ENCODE measurements at regions of chr22 and their contacts with region 1.

Region 1: DNA sequence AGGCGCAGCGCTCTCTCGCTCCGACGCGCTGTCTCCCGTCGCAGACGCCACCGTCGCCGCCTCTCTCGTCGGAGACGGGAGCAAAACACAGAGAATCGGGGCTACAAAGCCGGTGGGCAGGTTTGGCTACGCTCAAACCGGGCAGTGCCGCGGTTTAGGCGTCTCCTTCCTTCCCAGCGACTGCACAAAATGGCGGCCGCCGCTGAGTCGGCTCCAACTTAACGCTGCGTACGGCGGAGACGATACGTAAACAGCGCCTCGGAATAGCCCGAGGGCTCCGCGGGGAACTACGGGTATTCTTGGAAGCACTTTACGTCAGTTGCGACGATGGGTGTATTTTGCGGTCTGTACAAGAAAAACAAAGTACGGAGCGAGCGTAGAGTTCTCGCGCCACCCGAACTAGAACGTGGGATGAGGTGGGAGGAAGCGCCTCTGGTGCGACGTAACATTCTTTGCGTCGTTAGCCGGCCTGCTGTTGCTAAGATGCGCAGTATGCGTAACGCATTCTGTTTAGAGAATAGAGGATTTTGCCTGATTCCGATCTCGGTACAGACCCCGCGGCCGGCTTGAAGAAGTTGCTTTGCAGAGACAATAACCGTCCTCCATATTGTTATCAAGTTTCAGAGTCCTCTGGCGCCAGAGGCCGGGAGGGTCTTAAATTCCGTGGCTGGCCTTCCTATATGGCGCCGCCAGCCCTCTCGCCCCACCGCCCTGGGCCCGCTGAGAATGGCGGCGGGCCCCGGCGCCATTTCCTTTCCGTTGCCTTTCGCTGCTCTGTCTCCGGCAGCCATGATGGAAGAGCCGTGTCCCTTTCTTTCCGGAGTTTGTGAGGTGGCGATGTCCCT is at the start of gene DDX17:
- DNase-seq: peak; percentile 96
- ATAC-seq: peak; percentile 91
- H3K4me3 Mint-ChIP-seq: peak within 1 kb of the TSS; percentile 93
- H3K27ac Mint-ChIP-seq: peak within 1 kb of the TSS; percentile 100
- H3K4me1 Mint-ChIP-seq: peaks cover 32% of the 10 kb centered on the region
- H3K27me3 Mint-ChIP-seq: no peaks in the 10 kb centered on the region
- CTCF ChIP-seq: no peak
- total RNA-seq, gene DDX17: 320 to 334 TPM

Region 2: DNA sequence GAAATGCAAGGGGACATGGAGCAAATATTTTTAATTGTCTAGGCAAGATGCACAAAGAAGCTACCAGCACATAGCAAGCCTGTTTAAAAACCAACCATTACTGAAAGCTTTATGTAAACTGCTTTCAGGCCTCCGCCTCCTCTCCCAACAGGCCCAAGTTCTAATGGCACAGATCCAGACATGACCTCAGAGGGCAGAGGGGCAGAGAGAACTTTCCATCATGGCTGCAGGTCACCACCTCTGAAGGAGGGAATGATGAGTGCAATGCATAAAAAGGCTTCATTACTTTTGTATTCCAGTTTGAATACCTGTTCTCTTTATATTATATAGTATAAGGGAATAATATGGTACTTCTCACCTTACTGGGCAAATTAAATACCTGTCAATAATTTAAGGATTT is 15.4 kb before region 1 on chr22:
- CTCF ChIA-PET with region 1: interaction called, 6 read pairs
- POLR2A ChIA-PET with region 1: interaction called, 43 read pairs
- intact Hi-C with region 1: no loop called
- DNase-seq: no peak
- ATAC-seq: no peak
- H3K4me3 Mint-ChIP-seq: no peak overlapping the region
- H3K27ac Mint-ChIP-seq: peak overlapping the region; percentile 89
- H3K4me1 Mint-ChIP-seq: peaks cover 68% of the 10 kb centered on the region
- H3K27me3 Mint-ChIP-seq: no peaks in the 10 kb centered on the region
- CTCF ChIP-seq: no peak

Region 3: GRCh38 chr22:38569972-38570778 is 63.8 kb after region 1 on chr22 and contains the start of gene DMC1:
- CTCF ChIA-PET with region 1: interaction called, 3 read pairs
- POLR2A ChIA-PET with region 1: interaction called, 8 read pairs
- intact Hi-C with region 1: loop called (anchors 5 kb)
- DNase-seq: peak; percentile 99
- ATAC-seq: peak; percentile 97
- H3K4me3 Mint-ChIP-seq: peak within 1 kb of the TSS; percentile 89
- H3K27ac Mint-ChIP-seq: peak within 1 kb of the TSS; percentile 98
- H3K4me1 Mint-ChIP-seq: peaks cover 13% of the 10 kb centered on the region
- H3K27me3 Mint-ChIP-seq: no peaks in the 10 kb centered on the region
- CTCF ChIP-seq: no peak
- total RNA-seq, gene DMC1: 14.2 to 15.1 TPM

Region 4: GRCh38 chr22:38614332-38615063 is 108.2 kb after region 1 on chr22:
- CTCF ChIA-PET with region 1: no interaction called
- POLR2A ChIA-PET with region 1: no interaction called
- intact Hi-C with region 1: no loop called
- DNase-seq: no peak
- ATAC-seq: no peak
- H3K4me3 Mint-ChIP-seq: no peak overlapping the region
- H3K27ac Mint-ChIP-seq: no peak overlapping the region
- H3K4me1 Mint-ChIP-seq: no peaks in the 10 kb centered on the region
- H3K27me3 Mint-ChIP-seq: no peaks in the 10 kb centered on the region
- CTCF ChIP-seq: no peak